ENCODE measurements at regions of chr2 and their contacts with region 1.

Region 1: GRCh38 chr2:241734467-241735208 is at the start of gene D2HGDH:
- DNase-seq: peak; percentile 47
- ATAC-seq: peak; percentile 90
- H3K4me3 ChIP-seq: peak within 1 kb of the TSS; percentile 74 to 85
- H3K27ac ChIP-seq: peak within 1 kb of the TSS; percentile 99
- H3K4me1 ChIP-seq: peaks cover 13 to 26% of the 10 kb centered on the region in 2 experiments; a peak in 2 of 4 replicates
- H3K27me3 ChIP-seq: no peaks in the 10 kb centered on the region
- CTCF ChIP-seq: no peak
- POLR2A ChIP-seq: peak; percentile 85
- RAD21 ChIP-seq: no peak
- total RNA-seq, gene D2HGDH: 46.3 TPM

Region 2: DNA sequence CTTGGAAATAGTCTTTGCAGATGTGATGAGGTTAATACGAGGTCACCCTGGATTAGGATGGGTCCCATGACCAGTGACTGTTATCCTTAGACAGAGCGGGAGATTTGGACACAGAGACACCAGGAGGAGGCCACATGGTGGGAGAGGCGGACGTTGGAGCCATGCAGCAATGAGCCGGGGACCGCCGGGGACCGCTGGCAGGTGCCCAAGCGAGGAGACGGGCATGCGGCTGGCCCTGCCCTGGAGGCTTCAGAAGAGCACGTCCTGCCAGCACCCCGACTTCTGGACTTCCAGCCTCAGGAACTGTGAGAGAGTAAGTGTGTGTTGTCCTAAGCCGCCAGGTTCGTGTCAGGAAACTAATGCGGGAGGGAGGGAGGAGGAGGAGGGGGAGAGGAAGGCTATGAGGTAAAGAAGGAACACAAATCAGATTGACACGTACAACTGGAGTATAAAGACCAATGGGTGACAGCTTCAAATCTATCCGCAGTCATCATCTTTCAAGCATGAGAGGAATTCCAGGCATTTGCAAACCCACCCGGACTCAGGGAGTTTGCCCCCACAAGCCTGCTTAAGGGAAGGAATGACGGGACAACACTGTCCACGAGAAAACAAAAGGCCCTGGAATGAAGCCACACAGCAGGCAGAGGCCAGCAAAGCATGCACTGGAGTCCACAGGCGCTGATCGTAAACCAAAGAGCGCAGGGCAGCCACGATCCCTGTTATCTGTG is 187.7 kb before region 1 on chr2:
- CTCF ChIA-PET with region 1: interaction called, 3 read pairs
- POLR2A ChIA-PET with region 1: no interaction called
- RAD21 ChIA-PET with region 1: no interaction called
- intact Hi-C with region 1: loop called (anchors 5 kb)
- DNase-seq: no peak
- ATAC-seq: no peak
- H3K4me3 ChIP-seq: no peak overlapping the region
- H3K27ac ChIP-seq: no peak overlapping the region
- H3K4me1 ChIP-seq: peaks cover 9 to 37% of the 10 kb centered on the region in 2 experiments
- H3K27me3 ChIP-seq: no peaks in the 10 kb centered on the region
- CTCF ChIP-seq: no peak
- POLR2A ChIP-seq: no peak
- RAD21 ChIP-seq: no peak

Region 3: GRCh38 chr2:241665727-241666440 is 68.8 kb before region 1 on chr2:
- CTCF ChIA-PET with region 1: no interaction called
- POLR2A ChIA-PET with region 1: no interaction called
- RAD21 ChIA-PET with region 1: no interaction called
- intact Hi-C with region 1: loop called (anchors 1 kb)
- DNase-seq: no peak
- ATAC-seq: no peak
- H3K4me3 ChIP-seq: no peak overlapping the region
- H3K27ac ChIP-seq: no peak overlapping the region
- H3K4me1 ChIP-seq: peaks cover 0 to 5% of the 10 kb centered on the region in 2 experiments; a peak in 1 of 4 replicates
- H3K27me3 ChIP-seq: no peaks in the 10 kb centered on the region
- CTCF ChIP-seq: no peak
- POLR2A ChIP-seq: no peak
- RAD21 ChIP-seq: no peak

Region 4: DNA sequence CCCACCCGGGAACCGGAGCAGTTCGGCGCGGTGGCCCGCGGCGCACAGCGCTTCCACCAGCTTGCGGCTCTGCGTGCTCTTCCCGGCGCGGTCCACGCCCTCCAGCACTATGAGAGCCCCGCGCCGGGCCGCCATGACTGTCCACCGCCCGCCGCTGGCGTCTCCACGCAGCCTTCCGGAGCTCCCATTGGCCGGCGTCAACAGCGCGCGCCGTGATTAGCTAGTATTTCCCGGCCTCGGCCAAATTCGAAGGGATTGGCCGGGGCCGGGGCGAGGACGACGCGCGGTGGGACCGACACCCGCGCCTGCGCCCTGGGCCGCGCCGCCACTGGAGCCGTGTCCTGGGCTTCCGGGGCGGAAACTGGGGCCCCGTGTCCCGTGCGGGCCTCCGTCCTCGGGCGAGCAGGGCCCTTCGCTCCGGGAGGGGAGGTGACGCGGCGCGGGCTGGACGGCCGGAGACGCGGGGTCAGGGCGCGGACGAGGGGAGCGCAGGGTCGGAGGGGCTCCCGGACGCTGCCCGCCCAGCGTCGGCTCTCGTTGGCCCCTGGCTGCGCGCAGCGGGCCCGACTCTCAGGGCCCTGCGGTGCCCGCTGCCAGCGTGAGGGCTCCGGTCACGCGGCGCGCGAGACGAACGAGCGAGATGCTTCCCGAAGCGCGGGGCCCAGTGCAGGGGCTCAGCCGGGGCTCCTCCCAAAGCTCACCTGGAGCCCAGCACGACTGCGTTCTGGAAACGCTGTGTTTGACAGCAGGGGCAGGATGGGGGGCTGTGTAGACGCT is 47.8 kb before region 1 on chr2 and contains the start of gene DTYMK:
- CTCF ChIA-PET with region 1: interaction called, 3 read pairs
- POLR2A ChIA-PET with region 1: no interaction called
- RAD21 ChIA-PET with region 1: no interaction called
- intact Hi-C with region 1: loop called (anchors 5 kb)
- DNase-seq: peak; percentile 84
- ATAC-seq: peak; percentile 95
- H3K4me3 ChIP-seq: peak within 1 kb of the TSS; percentile 84 to 86
- H3K27ac ChIP-seq: peak within 1 kb of the TSS; percentile 90
- H3K4me1 ChIP-seq: peaks cover 8 to 23% of the 10 kb centered on the region in 2 experiments
- H3K27me3 ChIP-seq: no peaks in the 10 kb centered on the region
- CTCF ChIP-seq: no peak
- POLR2A ChIP-seq: no peak
- RAD21 ChIP-seq: no peak
- total RNA-seq, gene DTYMK: 83.3 TPM

Region 5: DNA sequence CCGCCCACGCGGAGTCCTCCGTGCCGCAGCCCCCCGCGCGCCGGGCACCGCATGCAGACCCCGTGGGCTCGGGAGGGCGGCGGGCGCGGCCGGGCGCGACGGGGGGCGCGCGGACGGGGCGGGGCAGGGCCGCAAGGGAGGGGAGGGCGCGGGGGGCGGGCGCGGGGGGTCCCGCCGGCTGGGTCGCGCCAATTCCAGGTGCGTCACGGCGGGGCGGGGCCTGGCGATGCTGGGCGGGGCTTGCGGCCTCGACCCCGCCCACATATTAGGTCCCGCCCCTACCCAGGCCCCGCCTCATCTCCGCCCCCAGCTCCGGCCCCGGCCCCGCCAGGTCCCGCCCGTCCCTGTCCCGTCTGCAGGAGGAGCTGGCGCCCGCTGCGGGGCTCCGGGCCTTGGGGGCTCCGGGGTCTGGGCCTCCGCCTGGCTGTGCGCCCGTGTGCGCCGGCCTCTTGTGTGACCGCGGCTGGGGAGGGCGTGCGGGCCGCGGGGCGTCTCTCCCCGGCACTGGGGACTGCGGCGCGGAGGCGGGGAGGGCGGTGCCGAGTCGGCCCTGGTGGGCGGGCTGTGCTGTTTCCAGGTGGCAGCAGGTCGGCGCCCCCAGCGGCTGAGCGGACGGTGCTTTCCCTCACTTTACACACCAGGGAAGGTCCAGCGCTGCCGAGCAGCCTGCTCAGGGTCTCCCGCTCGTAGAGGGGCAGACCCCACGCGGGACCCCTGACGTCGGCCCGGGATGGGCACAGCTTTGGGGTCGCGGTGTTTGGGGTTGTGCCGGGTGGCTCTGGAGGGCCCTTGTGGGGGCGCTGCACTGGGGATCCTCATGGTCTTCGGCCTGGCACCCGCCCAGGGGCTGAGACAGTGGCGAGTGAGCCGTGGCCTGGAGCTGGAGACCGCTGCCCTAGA is 32.3 kb before region 1 on chr2:
- CTCF ChIA-PET with region 1: interaction called, 9 read pairs
- POLR2A ChIA-PET with region 1: interaction called, 5 read pairs
- RAD21 ChIA-PET with region 1: interaction called in 1 of 2 experiments, 6 read pairs
- intact Hi-C with region 1: loop called (anchors 2 kb)
- DNase-seq: peak; percentile 59
- ATAC-seq: peak; percentile 74
- H3K4me3 ChIP-seq: peak overlapping the region; percentile 67 to 69
- H3K27ac ChIP-seq: peak overlapping the region; percentile 99
- H3K4me1 ChIP-seq: peaks cover 14 to 31% of the 10 kb centered on the region in 2 experiments
- H3K27me3 ChIP-seq: no peaks in the 10 kb centered on the region
- CTCF ChIP-seq: peak; percentile 49 to 61 (median 58)
- POLR2A ChIP-seq: no peak
- RAD21 ChIP-seq: no peak

Region 6: DNA sequence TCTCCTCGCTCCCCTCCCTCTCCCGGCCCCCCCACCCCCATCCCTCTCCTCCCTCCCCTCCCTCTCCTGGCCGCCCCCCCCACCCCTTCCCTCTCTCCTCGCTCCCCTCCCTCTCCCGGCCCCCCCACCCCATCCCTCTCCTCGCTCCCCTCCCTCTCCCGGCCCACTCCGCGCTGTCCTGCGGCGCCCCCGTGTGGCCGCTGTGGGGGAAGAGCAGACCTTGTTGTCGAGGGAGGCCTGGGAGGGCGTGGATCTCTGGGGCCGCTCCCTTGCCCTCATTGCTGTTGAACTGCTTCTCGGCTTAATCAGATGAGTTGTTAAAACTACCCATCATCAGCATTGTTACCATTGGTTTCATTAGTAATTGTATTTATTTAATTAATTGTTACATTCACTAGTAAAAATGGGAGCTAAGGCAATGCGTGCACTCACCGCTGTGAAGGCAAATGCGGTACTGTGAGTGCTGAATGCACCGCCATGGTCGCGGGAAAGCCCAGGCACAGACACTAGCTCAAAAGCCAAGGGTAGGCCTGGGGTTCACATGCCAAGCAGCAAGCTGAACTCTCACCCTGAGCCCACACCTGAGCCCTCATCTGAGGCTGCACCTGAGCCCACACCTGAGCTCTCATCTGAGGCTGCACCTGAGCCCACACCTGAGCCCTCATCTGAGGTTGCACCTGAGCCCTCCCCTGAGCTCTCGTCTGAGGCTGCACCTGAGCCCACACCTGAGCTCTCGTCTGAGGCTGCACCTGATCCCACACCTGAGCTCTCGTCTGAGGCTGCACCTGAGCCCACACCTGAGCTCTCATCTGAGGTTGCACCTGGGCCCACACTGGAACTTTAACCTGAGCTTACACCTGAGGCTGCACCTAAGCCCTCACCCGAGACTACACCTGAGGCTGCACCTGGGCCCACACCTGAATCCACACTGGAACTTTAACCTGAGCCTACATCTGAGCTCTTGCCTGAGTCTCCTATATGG is 143.6 kb after region 1 on chr2:
- CTCF ChIA-PET with region 1: interaction called, 4 read pairs
- POLR2A ChIA-PET with region 1: no interaction called
- RAD21 ChIA-PET with region 1: no interaction called
- intact Hi-C with region 1: loop called (anchors 2 kb)
- DNase-seq: no peak
- ATAC-seq: peak; percentile 41
- H3K4me3 ChIP-seq: no peak overlapping the region
- H3K27ac ChIP-seq: no peak overlapping the region
- H3K4me1 ChIP-seq: peaks cover 10 to 23% of the 10 kb centered on the region in 2 experiments; a peak in 3 of 4 replicates
- H3K27me3 ChIP-seq: no peaks in the 10 kb centered on the region
- CTCF ChIP-seq: peak; percentile 56 to 72 (median 63); a peak in 5 of 6 replicates
- POLR2A ChIP-seq: no peak
- RAD21 ChIP-seq: peak; percentile 85